Dendritic cell treated with granulocyte-macrophage colony-stimulating factor and Interleukin-4, amounts not matched to agents 40 ng/mL and 50 ng/mL, for 4 days (primary cell): ENCODE measurements at regions of chr1 and their contacts with region 1.

Region 1: DNA sequence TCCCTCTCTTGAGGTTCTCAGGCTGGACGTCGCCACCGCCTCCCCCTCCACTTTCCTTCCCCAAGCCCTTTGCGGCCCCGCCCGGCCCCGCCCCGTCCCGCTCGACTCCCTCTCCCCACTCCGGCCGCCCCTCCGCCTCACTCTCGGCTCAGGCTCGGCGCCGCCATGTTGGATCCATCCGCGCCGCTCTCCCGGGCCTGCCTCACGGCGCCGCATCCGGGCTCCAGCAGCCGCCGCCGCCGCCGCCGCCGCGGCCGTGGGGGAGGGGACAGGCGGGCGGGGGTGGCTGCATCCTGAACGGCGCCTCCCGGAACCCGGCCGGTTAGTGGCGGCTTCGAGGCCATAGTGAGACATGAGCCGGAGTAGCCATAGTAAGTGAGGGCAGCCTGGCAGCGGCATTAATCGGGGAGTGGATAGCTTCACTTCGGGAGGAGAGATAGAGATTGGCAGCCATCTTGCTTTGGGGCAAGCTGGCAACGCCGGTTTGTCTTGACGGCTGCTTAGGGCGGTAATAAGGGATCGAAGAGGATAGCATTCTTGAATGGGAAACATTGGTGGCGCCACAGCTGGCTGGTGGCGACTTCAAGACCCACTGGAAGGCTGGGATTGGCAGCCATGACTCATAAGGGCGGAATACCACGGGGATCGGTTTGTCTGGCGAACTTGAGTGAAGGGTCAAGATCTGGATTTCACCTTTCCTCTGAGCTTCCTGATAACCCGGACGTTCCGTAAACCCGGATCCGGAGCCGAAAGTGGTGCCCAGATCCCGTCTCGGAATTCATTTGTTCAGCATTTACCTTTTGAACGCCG is at the start of gene DEDD:
- H3K4me3 Mint-ChIP-seq: no peak within 1 kb of the TSS
- H3K27ac Mint-ChIP-seq: no peak within 1 kb of the TSS
- H3K4me1 Mint-ChIP-seq: peaks cover 68% of the 10 kb centered on the region
- H3K27me3 Mint-ChIP-seq: no peaks in the 10 kb centered on the region

Region 2: GRCh38 chr1:161117759-161118581 is 14.6 kb before region 1 on chr1 and contains the starts of genes NIT1 and PFDN2:
- intact Hi-C with region 1: loop called (anchors 2 kb)
- H3K4me3 Mint-ChIP-seq: peak within 1 kb of the TSS; percentile 89
- H3K27ac Mint-ChIP-seq: peak within 1 kb of the TSS; percentile 97
- H3K4me1 Mint-ChIP-seq: peaks cover 86% of the 10 kb centered on the region
- H3K27me3 Mint-ChIP-seq: no peaks in the 10 kb centered on the region

Region 3: DNA sequence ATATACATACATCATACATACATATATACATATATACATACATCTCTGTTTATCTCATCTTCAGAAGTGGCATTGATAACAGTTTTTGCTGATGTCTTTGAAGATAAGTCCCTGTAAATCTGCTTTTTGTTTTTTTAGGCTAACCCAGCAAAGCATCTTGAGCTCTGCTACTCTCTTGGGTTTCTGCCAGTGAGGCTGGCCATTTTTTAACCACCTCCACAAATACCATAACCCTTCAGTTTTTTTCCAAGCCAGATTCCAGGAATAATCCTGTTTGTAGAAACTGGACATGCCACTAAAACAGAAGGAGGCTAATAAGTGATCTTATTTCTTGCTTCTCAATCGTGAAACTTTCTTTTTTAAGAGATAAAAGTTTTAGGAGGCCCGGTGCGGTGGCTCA is 203.2 kb after region 1 on chr1:
- intact Hi-C with region 1: no loop called
- H3K4me3 Mint-ChIP-seq: no peak overlapping the region
- H3K27ac Mint-ChIP-seq: no peak overlapping the region
- H3K4me1 Mint-ChIP-seq: peaks cover 5% of the 10 kb centered on the region
- H3K27me3 Mint-ChIP-seq: no peaks in the 10 kb centered on the region